Calu3 (cell line): ENCODE measurements at regions of chr15 and their contacts with region 1.

Region 1: DNA sequence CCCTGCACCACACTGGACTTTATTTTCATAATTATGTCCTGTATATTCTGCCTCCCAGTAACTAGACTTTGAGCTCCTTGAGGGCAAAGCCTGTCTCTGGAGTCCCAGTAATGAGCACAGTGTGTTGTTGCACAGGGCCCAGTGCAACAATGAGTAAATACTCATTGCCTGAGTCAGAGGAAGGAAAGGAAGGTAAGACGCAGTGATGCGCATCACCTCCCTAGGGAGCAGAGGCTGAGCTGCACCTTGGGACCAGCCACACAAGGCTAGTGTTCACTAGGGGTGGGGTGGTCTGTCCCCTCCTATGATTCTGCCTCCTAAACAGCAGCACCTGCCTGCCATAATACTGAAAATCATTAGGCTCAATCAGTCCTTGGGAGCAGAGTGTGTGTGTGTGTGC is 86.6 kb upstream of the ADAMTSL3 start:
- DNase-seq: no peak
- H3K4me3 Mint-ChIP-seq: no peak overlapping the region
- H3K27ac Mint-ChIP-seq: no peak overlapping the region
- H3K4me1 Mint-ChIP-seq: no peaks in the 10 kb centered on the region
- H3K27me3 Mint-ChIP-seq: no peaks in the 10 kb centered on the region
- CTCF ChIP-seq: no peak

Region 2: GRCh38 chr15:83447710-83448461 is 119.4 kb before region 1 on chr15:
- CTCF ChIA-PET with region 1: no interaction called
- intact Hi-C with region 1: no loop called
- DNase-seq: no peak
- H3K4me3 Mint-ChIP-seq: peak overlapping the region; percentile 79
- H3K27ac Mint-ChIP-seq: no peak overlapping the region
- H3K4me1 Mint-ChIP-seq: no peaks in the 10 kb centered on the region
- H3K27me3 Mint-ChIP-seq: peaks cover 51% of the 10 kb centered on the region
- CTCF ChIP-seq: no peak

Region 3: DNA sequence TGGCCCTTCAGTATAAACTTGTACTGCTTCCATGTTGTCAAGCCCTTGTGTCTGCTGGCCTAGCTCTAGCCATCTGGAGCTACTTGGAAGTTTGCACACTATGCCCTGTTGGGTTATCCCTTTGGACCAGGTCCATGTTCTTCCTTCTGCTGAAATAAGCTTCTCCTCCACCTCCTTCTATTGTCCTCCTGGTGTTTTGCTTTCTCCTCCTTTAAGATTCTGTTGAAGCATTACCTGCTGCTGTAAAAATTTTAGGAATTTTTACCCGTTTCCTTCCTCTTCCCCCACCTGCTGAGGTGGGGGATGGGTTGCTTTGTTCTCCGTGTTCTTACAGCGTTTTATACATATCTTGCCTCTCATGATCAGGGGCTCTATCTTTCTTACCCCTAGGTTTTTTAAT is 68.5 kb before region 1 on chr15:
- CTCF ChIA-PET with region 1: no interaction called
- intact Hi-C with region 1: no loop called
- DNase-seq: no peak
- H3K4me3 Mint-ChIP-seq: no peak overlapping the region
- H3K27ac Mint-ChIP-seq: no peak overlapping the region
- H3K4me1 Mint-ChIP-seq: no peaks in the 10 kb centered on the region
- H3K27me3 Mint-ChIP-seq: peaks cover 36% of the 10 kb centered on the region
- CTCF ChIP-seq: no peak

Region 4: DNA sequence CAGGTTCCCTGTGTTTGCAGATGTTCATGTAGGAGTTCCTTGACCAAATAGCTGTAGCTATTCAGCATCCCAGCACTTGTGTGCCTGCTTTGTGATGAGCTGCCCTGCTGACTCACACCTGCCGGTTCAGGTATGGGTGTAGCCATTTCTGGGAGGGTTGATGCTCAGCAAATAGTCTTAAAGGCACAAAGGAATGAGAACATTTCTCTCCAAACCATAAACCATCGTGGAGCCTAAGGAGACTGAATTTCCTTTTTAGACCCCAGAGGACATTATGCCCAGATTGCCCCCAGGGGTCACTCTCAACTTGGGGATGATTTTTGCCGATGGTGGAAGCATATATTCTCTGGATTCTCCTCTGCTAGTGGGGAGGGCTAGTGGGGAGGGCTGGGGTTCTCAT is 167.2 kb after region 1 on chr15:
- CTCF ChIA-PET with region 1: interaction called, 3 read pairs
- intact Hi-C with region 1: loop called (anchors 5 kb)
- DNase-seq: peak; percentile 63
- H3K4me3 Mint-ChIP-seq: no peak overlapping the region
- H3K27ac Mint-ChIP-seq: no peak overlapping the region
- H3K4me1 Mint-ChIP-seq: peaks cover 26% of the 10 kb centered on the region
- H3K27me3 Mint-ChIP-seq: no peaks in the 10 kb centered on the region
- CTCF ChIP-seq: peak; percentile 40